Colonic mucosa (tissue), 4 donors: ENCODE measurements at regions of chr4 and their contacts with region 1.

Region 1: DNA sequence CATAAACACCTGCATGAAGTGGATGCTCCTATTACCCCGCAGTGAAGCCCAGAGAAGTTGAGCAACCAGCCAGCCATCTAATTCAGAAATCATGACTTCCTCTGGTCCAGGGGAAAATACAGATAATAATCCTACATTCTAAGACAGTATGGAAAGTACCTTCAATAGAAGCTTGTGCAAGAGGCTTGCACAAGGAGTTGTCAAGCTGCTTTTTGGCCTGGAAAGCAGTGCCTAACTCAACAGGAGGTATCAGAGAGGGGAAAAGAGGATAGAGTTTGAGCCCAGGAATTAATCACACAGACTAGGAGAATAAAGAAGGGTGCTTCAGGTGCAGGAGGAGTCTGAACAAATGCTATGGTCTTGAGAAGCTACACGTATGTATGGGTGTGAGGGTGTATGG is 26.7 kb downstream of the TMEM192 start:
- DNase-seq: no peak
- H3K4me3 ChIP-seq: no peak overlapping the region
- H3K27ac ChIP-seq: no peak overlapping the region
- H3K4me1 ChIP-seq: no peaks in the 10 kb centered on the region
- H3K27me3 ChIP-seq: no peaks in the 10 kb centered on the region
- CTCF ChIP-seq: no peak

Region 2: GRCh38 chr4:164956766-164957643 is 128.9 kb before region 1 on chr4:
- intact Hi-C with region 1: loop called (anchors 10 kb)
- DNase-seq: peak; percentile 91
- H3K4me3 ChIP-seq: peak overlapping the region; percentile 71
- H3K27ac ChIP-seq: no peak overlapping the region
- H3K4me1 ChIP-seq: no peaks in the 10 kb centered on the region
- H3K27me3 ChIP-seq: no peaks in the 10 kb centered on the region
- CTCF ChIP-seq: no peak